Activated CD4-positive, alpha-beta T cell treated with anti-CD3 and anti-CD28 coated beads, Interleukin-2, amount 10 ng/mL, durations not matched to agents 24 days and 14 days (primary cell): ENCODE measurements at regions of chr9 and their contacts with region 1.

Region 1: DNA sequence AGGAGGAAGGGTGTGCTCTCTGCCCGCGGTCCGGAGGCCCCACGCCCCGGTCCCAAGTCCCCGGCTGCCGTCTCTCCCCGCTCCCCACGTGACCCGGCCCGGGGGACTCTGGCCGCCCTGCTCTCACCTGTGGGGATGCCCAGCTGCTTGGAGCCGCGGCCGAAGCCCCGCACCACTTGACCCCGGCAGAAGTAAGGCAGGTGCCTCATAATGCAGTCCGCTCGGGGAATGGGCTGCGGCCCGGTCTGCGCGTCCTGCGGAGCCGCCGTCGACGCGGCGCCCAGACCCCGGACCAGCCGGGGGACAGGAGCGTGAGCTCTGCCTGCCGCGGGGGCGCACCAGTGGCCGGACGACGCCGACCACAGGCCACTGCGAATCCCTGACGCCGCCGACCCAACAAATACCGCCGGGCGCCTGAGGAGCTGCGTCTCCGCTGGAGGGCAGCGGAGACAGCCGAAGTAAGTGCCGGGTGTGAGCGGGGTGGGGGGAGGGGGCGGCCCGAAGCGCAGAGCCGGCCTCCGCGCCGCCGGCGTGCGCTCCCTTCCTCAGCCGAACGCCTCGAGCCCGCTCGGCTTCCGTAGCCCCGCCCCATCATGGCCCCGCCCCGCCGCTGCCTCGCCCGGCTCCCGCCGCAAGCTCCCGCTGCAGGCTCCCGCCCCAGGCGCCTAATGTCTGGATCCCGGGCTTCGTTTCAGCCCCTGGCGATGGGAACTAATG is at the start of gene RFK:
- DNase-seq: peak; percentile 98
- H3K4me3 Mint-ChIP-seq: peak within 1 kb of the TSS; percentile 97
- H3K27ac Mint-ChIP-seq: peak within 1 kb of the TSS; percentile 99
- H3K4me1 Mint-ChIP-seq: peaks cover 25% of the 10 kb centered on the region
- H3K27me3 Mint-ChIP-seq: no peaks in the 10 kb centered on the region
- total RNA-seq, gene RFK: 16.6 and 17.9 TPM in 2 replicates

Region 2: DNA sequence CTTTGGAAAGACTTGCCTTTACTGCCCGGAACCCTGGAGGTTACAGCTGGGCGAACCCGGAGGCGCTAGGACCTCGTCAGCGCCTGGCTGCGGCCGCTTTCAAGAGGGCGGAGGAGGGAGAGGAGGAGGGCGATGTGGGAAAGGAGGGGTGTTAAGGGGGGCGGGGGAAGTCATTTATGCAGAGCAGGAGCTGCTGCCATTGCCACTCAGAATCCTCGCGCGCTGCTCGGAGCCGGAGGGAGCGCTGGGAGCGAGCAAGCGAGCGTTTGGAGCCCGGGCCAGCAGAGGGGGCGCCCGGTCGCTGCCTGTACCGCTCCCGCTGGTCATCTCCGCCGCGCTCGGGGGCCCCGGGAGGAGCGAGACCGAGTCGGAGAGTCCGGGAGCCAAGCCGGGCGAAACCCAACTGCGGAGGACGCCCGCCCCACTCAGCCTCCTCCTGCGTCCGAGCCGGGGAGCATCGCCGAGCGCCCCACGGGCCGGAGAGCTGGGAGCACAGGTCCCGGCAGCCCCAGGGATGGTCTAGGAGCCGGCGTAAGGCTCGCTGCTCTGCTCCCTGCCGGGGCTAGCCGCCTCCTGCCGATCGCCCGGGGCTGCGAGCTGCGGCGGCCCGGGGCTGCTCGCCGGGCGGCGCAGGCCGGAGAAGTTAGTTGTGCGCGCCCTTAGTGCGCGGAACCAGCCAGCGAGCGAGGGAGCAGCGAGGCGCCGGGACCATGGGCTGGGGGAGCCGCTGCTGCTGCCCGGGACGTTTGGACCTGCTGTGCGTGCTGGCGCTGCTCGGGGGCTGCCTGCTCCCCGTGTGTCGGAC is 503.4 kb before region 1 on chr9 and contains the start of gene PCSK5:
- intact Hi-C with region 1: loop called (anchors 2 kb)
- DNase-seq: peak; percentile 95
- H3K4me3 Mint-ChIP-seq: peak within 1 kb of the TSS; percentile 94
- H3K27ac Mint-ChIP-seq: peak within 1 kb of the TSS; percentile 74
- H3K4me1 Mint-ChIP-seq: peaks cover 27% of the 10 kb centered on the region
- H3K27me3 Mint-ChIP-seq: peaks cover 46% of the 10 kb centered on the region
- total RNA-seq, gene PCSK5: 1.6 and 1.9 TPM in 2 replicates

Region 3: GRCh38 chr9:76374702-76375559 is 19.2 kb before region 1 on chr9:
- intact Hi-C with region 1: no loop called
- DNase-seq: no peak
- H3K4me3 Mint-ChIP-seq: no peak overlapping the region
- H3K27ac Mint-ChIP-seq: no peak overlapping the region
- H3K4me1 Mint-ChIP-seq: no peaks in the 10 kb centered on the region
- H3K27me3 Mint-ChIP-seq: no peaks in the 10 kb centered on the region

Region 4: DNA sequence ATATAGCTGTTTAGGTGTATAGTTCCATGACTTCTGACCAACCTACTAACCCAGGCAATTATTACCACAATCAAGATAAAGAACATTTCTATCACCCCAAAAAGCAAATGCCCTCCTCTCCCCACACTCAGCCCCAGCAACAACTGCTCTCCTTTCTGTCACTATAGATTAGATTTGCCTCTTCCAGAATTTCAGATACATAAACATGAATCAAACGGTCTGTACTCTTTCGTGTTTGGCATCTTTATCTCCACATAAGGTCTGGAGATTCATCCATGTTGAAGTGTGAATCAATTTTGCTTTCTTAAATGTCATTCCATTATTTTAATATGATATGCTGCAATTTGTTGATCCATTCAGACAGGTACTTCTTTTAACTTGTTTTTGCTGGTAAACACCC is 54.4 kb after region 1 on chr9:
- intact Hi-C with region 1: no loop called
- DNase-seq: no peak
- H3K4me3 Mint-ChIP-seq: no peak overlapping the region
- H3K27ac Mint-ChIP-seq: no peak overlapping the region
- H3K4me1 Mint-ChIP-seq: peaks cover 23% of the 10 kb centered on the region
- H3K27me3 Mint-ChIP-seq: no peaks in the 10 kb centered on the region

Region 5: DNA sequence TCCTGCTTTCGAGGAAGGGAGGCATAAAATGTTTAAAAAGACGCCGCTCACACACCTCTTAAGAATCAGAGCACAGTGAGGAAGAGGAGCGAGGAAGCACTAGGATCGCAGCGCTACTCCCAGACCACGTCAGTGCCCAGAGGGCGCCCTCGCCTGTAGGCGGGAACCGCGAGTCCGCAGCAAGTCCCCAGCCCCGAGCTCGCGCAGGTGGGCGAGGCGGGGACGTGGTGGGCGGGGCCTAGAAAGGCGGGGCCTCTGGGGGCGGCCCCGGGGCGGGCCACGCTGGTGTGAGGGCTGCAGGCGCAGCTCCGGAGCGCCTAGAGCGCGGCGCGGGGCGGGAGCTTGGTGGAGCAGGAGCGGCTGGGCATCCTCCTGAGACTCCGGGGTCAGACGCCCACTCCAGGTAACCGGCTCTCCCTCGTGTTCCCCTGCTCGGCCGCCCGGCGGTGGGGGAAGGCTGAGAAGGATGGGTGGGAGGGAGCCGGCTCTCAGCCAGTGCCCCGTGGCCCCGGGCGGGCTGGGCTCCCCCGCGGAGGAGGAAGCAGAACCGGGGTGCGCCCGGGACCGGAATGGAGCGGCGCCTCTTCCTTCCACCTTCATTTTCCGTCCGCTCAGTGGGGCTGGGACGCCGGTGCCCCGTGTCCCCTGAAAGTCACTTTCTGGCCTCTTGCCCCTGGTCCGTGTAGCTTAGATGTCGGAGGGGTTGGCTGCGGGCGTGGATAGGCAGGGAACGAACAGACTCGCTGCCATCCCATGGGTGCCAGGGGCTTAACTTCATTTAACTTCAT is 65.0 kb after region 1 on chr9 and contains the start of gene GCNT1:
- intact Hi-C with region 1: loop called (anchors 1 kb)
- DNase-seq: peak; percentile 99
- H3K4me3 Mint-ChIP-seq: peak within 1 kb of the TSS; percentile 92
- H3K27ac Mint-ChIP-seq: peak within 1 kb of the TSS; percentile 88
- H3K4me1 Mint-ChIP-seq: peaks cover 28% of the 10 kb centered on the region
- H3K27me3 Mint-ChIP-seq: no peaks in the 10 kb centered on the region
- total RNA-seq, gene GCNT1: 7.0 and 9.8 TPM in 2 replicates

Region 6: GRCh38 chr9:76658535-76659231 is 264.6 kb after region 1 on chr9:
- intact Hi-C with region 1: loop called (anchors 2 kb)
- DNase-seq: peak; percentile 73
- H3K4me3 Mint-ChIP-seq: no peak overlapping the region
- H3K27ac Mint-ChIP-seq: no peak overlapping the region
- H3K4me1 Mint-ChIP-seq: peaks cover 27% of the 10 kb centered on the region
- H3K27me3 Mint-ChIP-seq: peaks cover 8% of the 10 kb centered on the region